ENCODE measurements at regions of chr7 and their contacts with region 1.

Region 1: DNA sequence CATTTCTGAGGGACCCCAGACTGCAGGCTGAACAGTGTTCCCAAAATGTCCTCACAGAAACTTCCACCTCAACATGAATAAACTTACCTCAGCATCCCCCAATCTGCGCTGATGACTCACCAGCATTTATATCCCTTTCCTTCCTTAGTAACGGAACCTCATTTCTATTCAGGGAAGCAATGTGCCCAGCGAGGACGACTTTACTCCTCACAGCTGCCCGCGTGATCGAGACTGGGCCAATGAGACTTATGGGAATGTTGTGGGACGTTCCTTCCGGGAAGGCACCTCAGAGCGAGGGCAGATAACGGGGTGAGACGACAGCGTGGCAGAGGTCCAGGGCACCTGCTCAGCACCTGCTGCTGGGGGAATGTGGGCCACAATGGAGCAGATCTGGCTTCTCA is 73.1 kb upstream of the CAMK2B start:
- DNase-seq: peak; percentile 98
- H3K4me3 ChIP-seq: peak overlapping the region in 1 of 3 experiments; percentile 10
- H3K27ac ChIP-seq: peak overlapping the region; percentile 88
- H3K4me1 ChIP-seq: peaks cover 31% of the 10 kb centered on the region
- H3K27me3 ChIP-seq: no peaks in the 10 kb centered on the region
- CTCF ChIP-seq: no peak
- POLR2A ChIP-seq: no peak

Region 2: DNA sequence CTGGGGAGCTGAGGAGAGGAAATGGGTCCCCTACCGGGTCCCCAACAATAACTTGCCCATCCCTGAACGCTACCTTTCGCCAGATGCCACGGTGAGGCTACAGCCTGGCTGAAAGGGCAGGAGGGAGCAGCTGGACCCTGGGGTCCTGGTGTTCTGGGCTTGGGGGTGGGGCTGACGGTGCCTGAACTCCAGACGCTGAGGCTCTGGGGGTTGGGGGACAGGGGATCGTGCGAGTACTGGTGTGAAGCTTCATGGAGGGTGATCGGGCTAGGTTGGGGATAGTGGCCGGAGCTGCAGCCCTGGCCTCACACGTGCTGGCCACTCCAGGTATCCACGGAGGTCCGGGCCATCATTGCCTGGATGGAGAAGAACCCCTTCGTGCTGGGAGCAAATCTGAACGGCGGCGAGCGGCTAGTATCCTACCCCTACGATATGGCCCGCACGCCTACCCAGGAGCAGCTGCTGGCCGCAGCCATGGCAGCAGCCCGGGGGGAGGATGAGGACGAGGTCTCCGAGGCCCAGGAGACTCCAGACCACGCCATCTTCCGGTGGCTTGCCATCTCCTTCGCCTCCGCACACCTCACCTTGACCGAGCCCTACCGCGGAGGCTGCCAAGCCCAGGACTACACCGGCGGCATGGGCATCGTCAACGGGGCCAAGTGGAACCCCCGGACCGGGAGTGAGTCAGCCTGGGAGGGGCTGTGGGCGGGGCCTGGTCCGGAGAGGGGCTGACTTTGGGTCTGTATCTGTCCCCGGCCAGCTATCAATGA is 286.1 kb before region 1 on chr7:
- CTCF ChIA-PET with region 1: no interaction called
- POLR2A ChIA-PET with region 1: no interaction called
- dilution Hi-C with region 1: no loop called
- intact Hi-C with region 1: no loop called
- DNase-seq: no peak
- H3K4me3 ChIP-seq: no peak overlapping the region
- H3K27ac ChIP-seq: no peak overlapping the region
- H3K4me1 ChIP-seq: no peaks in the 10 kb centered on the region
- H3K27me3 ChIP-seq: no peaks in the 10 kb centered on the region
- CTCF ChIP-seq: no peak
- POLR2A ChIP-seq: no peak

Region 3: GRCh38 chr7:44212018-44212417 is 186.5 kb before region 1 on chr7:
- CTCF ChIA-PET with region 1: no interaction called
- POLR2A ChIA-PET with region 1: no interaction called
- dilution Hi-C with region 1: no loop called
- intact Hi-C with region 1: no loop called
- DNase-seq: no peak
- H3K4me3 ChIP-seq: no peak overlapping the region
- H3K27ac ChIP-seq: no peak overlapping the region
- H3K4me1 ChIP-seq: no peaks in the 10 kb centered on the region
- H3K27me3 ChIP-seq: no peaks in the 10 kb centered on the region
- CTCF ChIP-seq: no peak
- POLR2A ChIP-seq: no peak

Region 4: DNA sequence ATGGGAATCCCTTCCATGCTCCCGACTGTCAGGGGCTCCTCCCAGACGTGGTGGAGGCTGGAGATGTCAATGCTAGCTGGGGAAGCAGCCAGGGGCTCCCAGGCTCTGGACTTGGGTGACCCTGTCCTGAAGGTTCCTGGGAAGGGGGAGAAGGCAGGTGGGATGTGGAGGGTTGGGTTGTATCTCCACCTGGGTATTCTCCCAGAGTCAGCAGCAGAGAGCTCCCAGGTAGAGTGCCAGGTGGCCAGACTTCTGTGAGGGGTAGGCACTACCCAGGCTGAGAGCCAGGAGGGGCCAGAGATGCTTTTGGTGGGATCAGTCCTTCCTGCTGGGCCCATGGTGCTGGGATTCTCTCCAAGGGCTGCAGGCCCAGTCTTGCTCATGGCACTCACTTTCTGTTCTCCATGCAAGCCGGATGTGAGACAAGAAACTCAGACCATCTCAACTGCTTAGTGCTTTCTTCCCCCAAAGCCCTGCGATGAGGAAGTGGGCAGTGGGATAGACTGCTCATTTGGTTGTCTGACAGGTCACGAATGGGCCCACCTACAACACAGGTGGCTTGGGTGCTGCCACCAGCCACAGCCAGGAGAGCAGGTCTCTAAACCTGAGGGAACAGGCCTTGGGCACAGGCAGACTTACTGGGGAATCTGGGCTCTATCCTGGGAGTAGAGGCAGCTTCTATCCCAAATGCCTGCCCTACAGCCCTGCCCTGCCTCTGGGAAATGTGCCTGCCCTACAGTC is 20.7 kb before region 1 on chr7:
- CTCF ChIA-PET with region 1: interaction called, 6 read pairs
- POLR2A ChIA-PET with region 1: interaction called, 3 read pairs
- dilution Hi-C with region 1: no loop called
- intact Hi-C with region 1: loop called (anchors 1 kb)
- DNase-seq: no peak
- H3K4me3 ChIP-seq: no peak overlapping the region
- H3K27ac ChIP-seq: peak overlapping the region; percentile 71
- H3K4me1 ChIP-seq: peaks cover 51% of the 10 kb centered on the region
- H3K27me3 ChIP-seq: no peaks in the 10 kb centered on the region
- CTCF ChIP-seq: no peak
- POLR2A ChIP-seq: no peak

Region 5: DNA sequence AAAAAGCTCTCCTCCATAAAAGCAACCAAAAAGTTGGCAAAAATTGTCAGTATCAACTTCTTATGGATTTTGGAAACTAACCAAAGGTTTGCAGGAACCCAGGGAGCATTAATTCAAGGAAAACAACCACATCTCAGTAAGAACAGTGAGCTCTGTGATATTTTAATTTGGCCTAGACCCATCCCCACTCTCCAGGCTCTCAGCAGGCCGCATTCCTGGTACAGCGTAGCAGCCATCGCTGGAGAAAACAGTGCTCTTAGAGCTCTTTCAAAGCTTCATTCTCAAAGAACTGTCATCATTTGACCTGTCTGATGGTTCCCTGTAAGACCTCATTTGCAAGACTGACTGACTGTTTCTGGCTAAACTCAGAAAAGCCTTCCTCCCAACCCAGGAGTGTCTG is 10.1 kb after region 1 on chr7:
- CTCF ChIA-PET with region 1: interaction called, 10 read pairs
- POLR2A ChIA-PET with region 1: no interaction called
- dilution Hi-C with region 1: no loop called
- intact Hi-C with region 1: no loop called
- DNase-seq: no peak
- H3K4me3 ChIP-seq: no peak overlapping the region
- H3K27ac ChIP-seq: no peak overlapping the region
- H3K4me1 ChIP-seq: peaks cover 19% of the 10 kb centered on the region
- H3K27me3 ChIP-seq: no peaks in the 10 kb centered on the region
- CTCF ChIP-seq: no peak
- POLR2A ChIP-seq: no peak

Region 6: DNA sequence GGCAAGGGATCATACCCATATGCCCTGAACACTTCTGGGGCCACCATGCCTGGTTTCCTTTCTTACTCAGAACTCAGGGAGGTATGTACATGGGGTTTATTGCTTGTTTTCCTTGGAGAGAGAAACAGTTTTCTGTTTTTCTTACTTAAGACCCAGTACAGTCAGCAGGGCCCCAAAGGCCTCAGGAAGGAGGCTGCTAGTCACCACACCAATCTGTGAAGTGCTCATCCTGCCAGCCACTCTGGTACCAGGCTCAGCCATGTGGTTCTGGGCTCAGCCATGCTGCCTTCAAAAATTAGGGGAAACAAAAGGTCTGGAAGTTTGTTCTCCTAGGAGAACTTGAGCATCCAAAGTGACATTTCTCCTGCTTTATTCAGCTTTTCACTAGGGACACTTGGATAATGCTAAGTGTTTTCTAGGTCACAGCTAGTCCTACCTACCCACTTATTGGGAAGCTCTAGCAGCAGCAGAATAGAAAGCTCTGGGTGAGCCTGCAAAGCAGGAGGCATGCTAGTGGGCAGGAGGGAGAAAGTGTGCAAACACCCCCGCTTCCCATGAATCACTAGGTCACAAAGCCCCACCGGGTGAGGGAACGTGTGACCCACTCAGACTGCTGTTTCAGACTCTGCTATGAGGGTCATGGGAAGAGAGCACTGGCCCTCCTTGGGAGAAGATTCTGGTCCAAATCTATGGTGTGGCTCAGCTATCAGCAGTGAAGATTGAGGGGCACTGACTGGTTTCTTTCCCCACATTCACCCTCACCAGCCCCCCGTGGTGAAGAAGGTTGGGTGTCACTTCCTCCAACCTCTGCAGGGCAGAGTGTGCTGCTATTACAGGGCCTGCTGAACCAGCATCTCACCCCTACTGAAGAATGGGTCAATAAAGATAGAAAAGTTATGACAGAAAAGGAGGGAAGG is 68.0 kb after region 1 on chr7:
- CTCF ChIA-PET with region 1: no interaction called
- POLR2A ChIA-PET with region 1: no interaction called
- dilution Hi-C with region 1: no loop called
- intact Hi-C with region 1: loop called (anchors 2 kb)
- DNase-seq: peak; percentile 63
- H3K4me3 ChIP-seq: no peak overlapping the region
- H3K27ac ChIP-seq: peak overlapping the region; percentile 45
- H3K4me1 ChIP-seq: peaks cover 34% of the 10 kb centered on the region
- H3K27me3 ChIP-seq: no peaks in the 10 kb centered on the region
- CTCF ChIP-seq: no peak
- POLR2A ChIP-seq: no peak